Panc1 (cell line): ENCODE measurements at regions of chr2 and their contacts with region 1.

Region 1: DNA sequence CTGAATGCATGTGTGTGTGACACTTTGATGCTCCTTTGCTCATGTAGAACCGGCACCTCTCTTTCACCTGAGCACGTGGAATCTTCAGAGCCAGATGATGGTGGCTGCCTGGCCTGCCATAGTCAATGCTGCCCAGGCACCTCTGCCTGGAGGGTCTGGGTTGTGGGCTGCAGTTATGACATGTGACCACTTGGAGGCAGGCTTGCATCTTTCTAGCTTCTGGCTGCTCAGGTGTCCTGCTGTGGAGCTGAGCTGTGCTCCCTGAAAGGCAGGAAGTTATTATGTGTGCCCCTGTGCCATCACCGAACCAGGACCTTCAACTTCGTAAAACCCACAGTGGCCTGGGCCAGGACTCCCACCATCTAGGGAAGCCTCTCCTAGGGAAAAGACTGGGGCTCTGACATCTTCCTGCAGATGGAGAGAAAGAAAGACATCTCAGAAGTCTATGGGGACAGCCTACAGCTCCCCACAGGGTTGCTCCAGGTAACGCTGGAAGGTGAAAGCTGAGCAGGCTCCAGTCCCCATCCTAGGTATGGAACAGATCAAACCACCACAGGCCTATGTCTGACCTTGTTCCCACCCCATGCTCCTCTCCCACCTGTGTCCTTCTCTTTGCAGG is 30.2 kb downstream of the PSD4 start:
- DNase-seq: peak; percentile 67
- ATAC-seq: peak; percentile 81
- H3K4me3 ChIP-seq: no peak overlapping the region
- H3K27ac ChIP-seq: 0 out of 2 replicates have a peak overlapping the region, but pooled peaks have one; percentile 31
- H3K4me1 ChIP-seq: no peaks in the 10 kb centered on the region; the same call in 1 of the 2 replicates
- H3K27me3 ChIP-seq: no peaks in the 10 kb centered on the region
- CTCF ChIP-seq: peak; percentile 92

Region 2: GRCh38 chr2:113080134-113080533 is 123.9 kb before region 1 on chr2:
- CTCF ChIA-PET with region 1: interaction called, 12 read pairs
- POLR2A ChIA-PET with region 1: no interaction called
- in situ Hi-C with region 1: no loop called
- intact Hi-C with region 1: loop called (anchors 5 kb)
- DNase-seq: peak; percentile 15
- ATAC-seq: peak; percentile 78
- H3K4me3 ChIP-seq: no peak overlapping the region
- H3K27ac ChIP-seq: no peak overlapping the region
- H3K4me1 ChIP-seq: no peaks in the 10 kb centered on the region
- H3K27me3 ChIP-seq: peaks cover 7% of the 10 kb centered on the region; the same call in 1 of the 2 replicates
- CTCF ChIP-seq: peak; percentile 91

Region 3: DNA sequence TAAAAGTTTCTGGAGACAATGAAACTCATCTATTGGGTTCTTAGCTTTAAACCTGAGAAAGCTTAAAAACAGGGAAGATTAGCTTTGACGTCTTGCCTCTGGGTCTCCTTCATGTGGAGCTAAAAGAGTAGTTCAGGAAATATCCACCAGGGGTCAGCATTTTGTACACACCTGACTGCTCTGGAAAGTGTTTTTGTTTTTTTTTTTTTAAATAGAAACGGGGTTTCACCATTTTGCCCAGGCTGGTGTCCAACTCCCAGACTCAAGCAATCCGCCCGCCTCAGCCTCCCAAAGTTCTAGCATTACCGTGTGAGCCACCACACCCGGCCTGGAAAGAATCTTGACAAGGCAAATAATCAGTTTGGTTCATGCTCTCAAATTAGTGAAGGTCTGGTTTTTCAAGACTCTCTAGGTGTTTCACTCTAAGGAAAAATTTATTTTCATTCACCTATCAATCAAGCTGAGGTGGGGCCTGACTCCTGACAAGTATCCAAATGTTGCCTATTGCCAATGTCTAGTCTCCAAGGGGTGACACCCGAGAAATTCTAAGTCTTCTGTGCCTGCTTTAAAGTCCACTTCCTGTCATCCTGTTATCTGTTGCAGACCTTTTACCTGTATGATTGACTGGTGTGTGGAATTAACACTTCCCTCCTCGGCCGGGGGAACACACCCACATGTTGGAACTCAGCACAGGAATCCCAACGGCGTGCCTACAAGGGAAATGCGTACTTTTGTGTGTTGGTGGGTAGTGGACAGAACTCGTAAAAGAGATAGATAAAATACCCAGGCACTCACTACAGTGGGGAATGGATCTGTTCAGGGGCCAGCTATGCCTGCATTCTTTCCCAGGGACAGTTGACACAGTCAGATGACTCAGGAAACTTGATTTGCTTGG is 65.3 kb before region 1 on chr2:
- CTCF ChIA-PET with region 1: interaction called, 34 read pairs
- POLR2A ChIA-PET with region 1: no interaction called
- in situ Hi-C with region 1: no loop called
- intact Hi-C with region 1: loop called (anchors 5 kb)
- DNase-seq: no peak
- ATAC-seq: peak; percentile 64; the same call in 1 of the 2 replicates
- H3K4me3 ChIP-seq: no peak overlapping the region
- H3K27ac ChIP-seq: no peak overlapping the region
- H3K4me1 ChIP-seq: no peaks in the 10 kb centered on the region
- H3K27me3 ChIP-seq: no peaks in the 10 kb centered on the region; the same call in 1 of the 2 replicates
- CTCF ChIP-seq: peak; percentile 87

Region 4: DNA sequence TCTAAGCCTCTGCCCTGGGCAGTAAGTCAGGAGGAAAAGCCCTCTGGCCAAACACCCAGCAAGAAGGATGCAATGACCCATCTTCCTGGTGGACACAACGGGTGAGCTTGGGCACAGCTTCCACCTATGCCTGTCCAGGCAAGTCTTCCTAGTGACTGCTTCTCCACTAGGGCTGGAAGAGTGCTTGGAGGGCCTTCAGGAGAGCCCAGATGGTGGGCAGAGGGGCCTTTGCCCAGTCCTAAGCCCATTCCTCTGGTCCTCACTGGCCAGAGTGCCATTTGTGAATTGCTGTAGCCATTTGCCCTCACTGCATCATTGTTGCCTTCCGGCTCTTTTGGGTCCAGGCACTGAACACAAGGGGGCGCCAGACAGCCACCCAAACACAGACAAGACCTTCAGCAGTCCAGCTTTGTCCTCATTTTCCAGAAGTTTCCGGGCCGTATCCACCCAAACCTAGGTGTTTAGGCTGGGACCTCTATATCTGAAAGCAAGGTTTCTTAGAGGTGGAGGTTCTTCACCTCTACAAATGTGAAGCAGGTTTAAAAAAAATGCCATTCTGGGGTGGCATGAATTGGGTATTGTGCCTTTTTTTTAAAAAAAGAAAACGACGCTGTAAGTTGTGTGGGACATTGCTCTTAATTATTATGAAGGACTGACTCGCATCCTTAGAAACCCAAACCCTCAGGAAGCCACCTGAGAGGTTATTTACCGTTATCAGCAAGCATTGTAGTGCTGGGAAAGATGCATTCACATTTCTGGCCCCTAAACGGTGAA is 45.2 kb after region 1 on chr2:
- CTCF ChIA-PET with region 1: interaction called, 9 read pairs
- POLR2A ChIA-PET with region 1: no interaction called
- in situ Hi-C with region 1: no loop called
- intact Hi-C with region 1: loop called (anchors 5 kb)
- DNase-seq: peak; percentile 61
- ATAC-seq: peak; percentile 89
- H3K4me3 ChIP-seq: no peak overlapping the region
- H3K27ac ChIP-seq: no peak overlapping the region
- H3K4me1 ChIP-seq: no peaks in the 10 kb centered on the region
- H3K27me3 ChIP-seq: no peaks in the 10 kb centered on the region
- CTCF ChIP-seq: peak; percentile 94

Region 5: DNA sequence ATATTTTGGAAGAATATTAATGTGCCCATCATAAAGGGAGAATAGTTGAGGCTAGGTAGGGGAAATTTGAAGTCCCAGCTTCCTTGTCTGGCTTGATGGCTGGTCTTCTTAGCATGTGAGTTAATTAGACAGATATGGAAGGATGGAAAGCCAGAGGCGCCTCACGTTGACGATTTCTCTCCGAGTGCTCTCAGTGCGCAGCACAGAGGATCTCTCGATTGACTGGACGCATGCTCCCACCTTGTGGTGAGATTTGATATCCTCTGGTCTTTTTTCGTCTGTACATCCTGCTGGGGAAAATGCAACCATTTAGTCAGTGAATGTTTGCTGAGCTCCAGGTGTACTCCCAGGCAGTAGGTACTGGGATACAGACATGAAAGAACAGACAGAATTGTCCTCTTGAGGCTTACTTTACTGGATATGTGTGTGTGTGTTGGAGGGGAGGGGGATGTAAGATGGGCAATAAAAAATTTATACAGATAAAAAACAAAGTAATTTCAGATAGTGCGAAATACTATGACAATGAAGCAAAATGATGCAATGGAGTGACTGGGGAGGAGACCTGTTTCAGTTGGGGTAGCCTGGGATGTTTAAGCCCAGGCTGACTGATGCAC is 166.6 kb after region 1 on chr2:
- CTCF ChIA-PET with region 1: interaction called, 14 read pairs
- POLR2A ChIA-PET with region 1: no interaction called
- in situ Hi-C with region 1: no loop called
- intact Hi-C with region 1: loop called (anchors 1 kb)
- DNase-seq: peak; percentile 61
- ATAC-seq: peak; percentile 98
- H3K4me3 ChIP-seq: no peak overlapping the region
- H3K27ac ChIP-seq: no peak overlapping the region
- H3K4me1 ChIP-seq: no peaks in the 10 kb centered on the region
- H3K27me3 ChIP-seq: no peaks in the 10 kb centered on the region
- CTCF ChIP-seq: peak; percentile 79

Region 6: DNA sequence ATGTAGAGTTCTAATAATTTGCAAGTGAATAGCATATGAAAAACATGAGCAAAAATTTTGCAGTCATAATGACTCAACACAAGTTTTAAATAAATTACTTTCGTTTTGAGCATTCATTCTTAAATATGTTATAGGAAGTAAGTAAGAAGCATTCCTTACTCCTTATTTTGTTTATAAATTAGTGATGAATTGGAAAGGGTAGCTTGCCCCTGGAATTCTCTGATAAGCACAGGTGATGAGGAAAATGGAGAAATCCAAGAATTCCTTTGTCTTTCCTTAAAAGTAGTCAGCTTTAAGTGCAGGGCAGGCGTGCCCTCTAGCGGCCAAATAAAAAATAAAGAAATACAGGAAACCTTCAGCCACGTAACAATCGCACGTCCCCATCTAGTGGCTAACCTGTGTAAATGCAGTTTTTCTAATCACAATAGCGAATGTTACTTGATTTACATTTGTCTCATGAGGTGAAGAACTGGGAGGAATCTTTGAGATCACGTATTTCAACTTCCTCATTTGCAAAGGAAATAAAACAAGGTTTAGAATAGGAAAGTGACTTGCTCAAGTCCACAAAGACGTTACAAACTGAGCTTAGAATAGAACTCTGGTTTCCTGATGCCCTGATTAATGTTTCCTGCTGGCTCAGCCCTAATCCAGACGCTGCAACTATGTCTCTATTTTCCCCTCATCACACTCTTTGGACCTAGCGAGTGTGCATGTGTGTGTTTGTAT is 186.3 kb after region 1 on chr2:
- CTCF ChIA-PET with region 1: interaction called, 12 read pairs
- POLR2A ChIA-PET with region 1: no interaction called
- in situ Hi-C with region 1: no loop called
- intact Hi-C with region 1: no loop called
- DNase-seq: peak; percentile 81
- ATAC-seq: peak; percentile 81
- H3K4me3 ChIP-seq: no peak overlapping the region
- H3K27ac ChIP-seq: no peak overlapping the region
- H3K4me1 ChIP-seq: no peaks in the 10 kb centered on the region
- H3K27me3 ChIP-seq: no peaks in the 10 kb centered on the region
- CTCF ChIP-seq: peak; percentile 95